ENCODE measurements at regions of chr20 and their contacts with region 1.

Region 1: GRCh38 chr20:40990542-40991120 is 38.0 kb upstream of the TOP1 start:
- DNase-seq: peak; percentile 88
- ATAC-seq: peak; percentile 94
- H3K4me3 Mint-ChIP-seq: no peak overlapping the region
- H3K27ac Mint-ChIP-seq: peak overlapping the region; percentile 87
- H3K4me1 Mint-ChIP-seq: peaks cover 51% of the 10 kb centered on the region
- H3K27me3 Mint-ChIP-seq: no peaks in the 10 kb centered on the region

Region 2: GRCh38 chr20:40962730-40963504 is 27.7 kb before region 1 on chr20:
- CTCF ChIA-PET with region 1: interaction called, 27 read pairs
- DNase-seq: peak; percentile 83
- ATAC-seq: peak; percentile 90
- H3K4me3 Mint-ChIP-seq: no peak overlapping the region
- H3K27ac Mint-ChIP-seq: no peak overlapping the region
- H3K4me1 Mint-ChIP-seq: peaks cover 15% of the 10 kb centered on the region
- H3K27me3 Mint-ChIP-seq: peaks cover 5% of the 10 kb centered on the region

Region 3: GRCh38 chr20:41003143-41003883 is 12.7 kb after region 1 on chr20:
- CTCF ChIA-PET with region 1: interaction called, 52 read pairs
- DNase-seq: peak; percentile 86
- ATAC-seq: peak; percentile 94
- H3K4me3 Mint-ChIP-seq: peak overlapping the region; percentile 54
- H3K27ac Mint-ChIP-seq: peak overlapping the region; percentile 97
- H3K4me1 Mint-ChIP-seq: peaks cover 44% of the 10 kb centered on the region
- H3K27me3 Mint-ChIP-seq: no peaks in the 10 kb centered on the region

Region 4: GRCh38 chr20:41038878-41039404 is 48.3 kb after region 1 on chr20:
- CTCF ChIA-PET with region 1: interaction called, 14 read pairs
- DNase-seq: no peak
- ATAC-seq: no peak
- H3K4me3 Mint-ChIP-seq: no peak overlapping the region
- H3K27ac Mint-ChIP-seq: peak overlapping the region; percentile 28
- H3K4me1 Mint-ChIP-seq: peaks cover 87% of the 10 kb centered on the region
- H3K27me3 Mint-ChIP-seq: no peaks in the 10 kb centered on the region

Region 5: GRCh38 chr20:41078329-41078728 is 87.7 kb after region 1 on chr20:
- CTCF ChIA-PET with region 1: interaction called, 121 read pairs
- DNase-seq: no peak
- ATAC-seq: no peak
- H3K4me3 Mint-ChIP-seq: peak overlapping the region; percentile 46
- H3K27ac Mint-ChIP-seq: peak overlapping the region; percentile 81
- H3K4me1 Mint-ChIP-seq: peaks cover 62% of the 10 kb centered on the region
- H3K27me3 Mint-ChIP-seq: no peaks in the 10 kb centered on the region

Measured in activated CD8-positive, alpha-beta memory T cell treated with anti-CD3 and anti-CD28 coated beads, Interleukin-2, amount 10 ng/mL, durations not matched to agents 7 days and 5 days (primary cell).